AG04450 (cell line): ENCODE measurements at regions of chr12 and their contacts with region 1.

Region 1: DNA sequence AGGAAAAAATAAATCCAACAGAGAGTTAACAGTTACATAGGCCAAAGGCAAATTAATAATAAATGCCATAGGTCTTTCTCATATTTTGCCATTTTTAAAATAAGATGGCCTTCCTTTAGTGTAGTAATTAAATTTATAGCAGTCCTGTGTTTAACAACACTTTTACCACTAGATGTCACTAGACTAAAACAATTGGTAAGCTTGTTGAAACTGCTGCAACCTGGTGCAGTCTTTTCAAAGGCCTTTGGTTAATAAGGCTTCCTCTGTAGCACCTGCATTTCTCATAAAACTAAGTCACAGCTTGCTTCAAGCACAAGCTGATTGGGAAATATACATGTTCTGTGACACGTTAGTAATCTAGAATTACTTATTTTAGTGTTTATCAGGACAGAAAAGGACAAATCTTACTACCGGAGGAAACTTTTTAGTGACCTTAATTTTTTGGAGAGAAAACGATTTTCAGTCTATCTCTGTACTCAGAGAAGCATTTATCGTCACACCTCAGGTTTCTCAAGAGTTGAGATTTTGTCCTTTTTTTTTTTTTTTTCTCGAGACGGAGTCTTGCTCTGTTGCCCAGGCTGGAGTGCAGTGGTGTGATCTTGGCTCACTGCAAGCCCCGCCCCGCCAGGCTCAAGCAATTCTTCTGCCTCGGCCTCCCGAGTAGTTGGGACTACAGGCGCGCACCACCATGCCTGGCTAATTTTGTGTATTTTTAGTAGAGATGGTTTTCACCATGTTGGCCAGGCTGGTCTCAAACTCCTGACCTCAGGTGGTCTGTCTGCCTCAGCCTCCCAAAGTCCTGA is 20.0 kb downstream of the BORCS5 start:
- DNase-seq: peak; percentile 60
- H3K4me3 ChIP-seq: no peak overlapping the region
- H3K27ac ChIP-seq: no peak overlapping the region
- H3K27me3 ChIP-seq: no peaks in the 10 kb centered on the region
- CTCF ChIP-seq: peak; percentile 65

Region 2: DNA sequence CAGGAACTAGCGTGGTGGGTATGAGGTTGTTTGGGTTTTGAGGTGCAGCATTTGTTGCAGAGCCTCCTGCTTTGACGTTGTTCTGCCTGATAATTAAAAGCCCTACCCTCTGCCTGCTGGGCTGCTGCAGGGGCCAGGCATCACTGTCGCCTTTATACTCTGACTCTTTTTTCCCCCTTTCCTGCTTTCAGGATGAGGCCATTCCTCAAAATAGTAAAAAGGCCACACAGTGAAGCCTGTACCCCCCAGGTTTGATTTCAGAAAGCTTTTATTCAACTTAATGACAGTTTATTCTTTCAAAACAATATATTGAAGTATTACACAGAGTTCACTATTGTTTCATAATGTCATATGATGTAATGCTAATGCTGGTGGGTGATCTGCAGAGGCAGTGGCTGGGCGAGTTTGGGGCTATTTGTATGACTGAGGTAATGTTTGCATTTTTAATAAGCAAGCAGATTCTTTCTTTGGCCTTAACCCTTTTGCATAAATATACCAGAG is 10.9 kb before region 1 on chr12:
- CTCF ChIA-PET with region 1: interaction called, 11 read pairs
- POLR2A ChIA-PET with region 1: no interaction called
- DNase-seq: no peak
- H3K4me3 ChIP-seq: no peak overlapping the region
- H3K27ac ChIP-seq: peak overlapping the region; percentile 69
- H3K27me3 ChIP-seq: no peaks in the 10 kb centered on the region
- CTCF ChIP-seq: no peak

Region 3: GRCh38 chr12:12474931-12475795 is 98.3 kb after region 1 on chr12:
- CTCF ChIA-PET with region 1: no interaction called
- POLR2A ChIA-PET with region 1: no interaction called
- DNase-seq: no peak
- H3K4me3 ChIP-seq: no peak overlapping the region
- H3K27ac ChIP-seq: no peak overlapping the region
- H3K27me3 ChIP-seq: no peaks in the 10 kb centered on the region
- CTCF ChIP-seq: no peak

Region 4: DNA sequence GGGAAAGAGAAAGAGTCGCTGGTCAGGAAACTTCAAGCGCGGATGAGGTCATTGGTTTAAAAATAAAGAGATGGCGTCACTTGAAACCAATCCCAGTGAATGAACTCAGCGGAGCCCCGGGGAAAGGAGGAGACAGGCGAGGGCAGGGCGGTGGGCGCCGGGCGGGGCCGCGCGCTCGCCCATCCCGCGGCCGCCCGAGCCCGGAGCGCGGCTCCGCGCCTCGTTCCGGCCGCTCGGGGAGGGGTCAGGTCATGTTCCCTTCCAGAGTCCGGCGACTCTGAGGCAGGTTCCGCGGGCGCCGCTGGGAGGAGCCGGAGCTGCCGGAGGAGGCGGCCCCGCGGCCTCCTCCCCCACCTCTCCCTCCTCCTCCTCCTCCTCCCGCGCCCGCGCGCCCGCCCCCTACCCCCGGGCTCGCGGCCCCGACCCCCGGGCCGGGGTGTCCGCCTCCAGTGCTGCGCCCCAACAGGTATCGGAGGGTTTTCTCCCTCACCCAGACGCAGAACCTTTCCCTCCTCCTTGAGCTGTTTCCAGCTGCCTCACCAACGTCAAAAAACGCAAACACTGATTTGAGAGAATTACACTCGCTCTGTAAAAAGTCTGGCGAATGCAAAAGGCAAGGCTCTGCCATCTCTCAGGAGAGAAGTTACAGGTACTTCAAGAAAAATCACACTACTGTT is 185.9 kb after region 1 on chr12 and contains the start of gene DUSP16:
- CTCF ChIA-PET with region 1: interaction called, 18 read pairs
- POLR2A ChIA-PET with region 1: no interaction called
- DNase-seq: peak; percentile 81
- H3K4me3 ChIP-seq: peak within 1 kb of the TSS; percentile 88
- H3K27ac ChIP-seq: peak within 1 kb of the TSS; percentile 89
- H3K27me3 ChIP-seq: peaks cover 5% of the 10 kb centered on the region
- CTCF ChIP-seq: no peak
- polyA plus RNA-seq, gene DUSP16: 11.1 and 12.8 TPM in 2 replicates

Region 5: DNA sequence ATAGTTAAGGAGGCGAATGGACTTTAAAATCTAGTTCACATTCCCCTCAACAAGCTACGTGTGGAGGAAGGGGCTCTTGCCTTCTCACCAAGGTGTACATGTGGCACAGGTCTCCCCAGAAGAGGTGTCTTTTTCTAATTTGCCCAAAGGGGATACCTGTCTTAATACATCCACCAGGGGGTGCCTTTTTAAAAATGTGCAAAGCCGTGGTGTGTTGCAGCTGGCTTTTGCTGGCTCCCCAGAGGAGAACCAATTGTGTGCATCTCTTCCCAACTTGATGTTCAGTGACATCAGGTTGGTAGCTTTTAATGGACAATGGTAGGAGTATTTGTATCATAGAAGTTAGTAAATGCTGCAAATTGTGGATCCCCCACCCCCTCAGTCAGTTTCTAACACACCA is 268.6 kb after region 1 on chr12:
- CTCF ChIA-PET with region 1: interaction called, 12 read pairs
- POLR2A ChIA-PET with region 1: no interaction called
- DNase-seq: no peak
- H3K4me3 ChIP-seq: no peak overlapping the region
- H3K27ac ChIP-seq: peak overlapping the region; percentile 22
- H3K27me3 ChIP-seq: no peaks in the 10 kb centered on the region
- CTCF ChIP-seq: peak; percentile 60

Region 6: DNA sequence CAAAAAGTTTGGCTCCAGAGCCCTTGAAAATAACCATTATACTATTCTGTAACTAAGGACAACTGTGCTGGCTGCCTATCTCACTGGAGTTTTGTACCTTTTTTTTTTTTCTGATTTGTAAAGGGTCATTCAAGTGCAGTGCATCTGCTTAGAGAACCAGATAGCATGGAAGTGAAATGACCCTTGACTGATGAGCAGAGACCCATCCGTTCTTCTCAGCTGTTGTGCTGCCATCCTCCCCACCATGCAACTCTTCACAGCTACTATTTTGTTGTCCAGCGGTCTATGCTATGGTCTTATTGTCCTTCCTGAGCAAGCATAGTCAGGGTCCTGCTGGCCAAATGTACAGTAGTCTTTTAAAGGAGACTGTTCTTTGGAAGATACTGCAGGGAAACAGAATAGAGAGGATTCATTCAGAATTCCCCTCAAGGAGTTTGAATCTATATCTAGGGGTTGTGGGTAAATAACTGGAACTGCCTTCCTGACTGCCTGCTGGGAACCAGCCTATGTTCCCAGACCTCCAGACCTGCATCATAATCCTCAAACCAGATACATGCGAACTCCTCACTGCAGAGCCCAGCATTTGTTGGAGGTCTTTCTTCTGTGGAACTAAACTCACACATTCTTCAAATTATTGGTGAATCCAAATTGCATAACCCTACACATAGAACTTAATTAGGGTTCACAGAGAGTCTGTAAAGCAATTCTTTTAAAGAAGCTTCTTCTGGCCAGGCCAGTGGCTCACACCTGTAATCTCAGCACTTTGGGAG is 278.0 kb after region 1 on chr12:
- CTCF ChIA-PET with region 1: interaction called, 35 read pairs
- POLR2A ChIA-PET with region 1: no interaction called
- DNase-seq: no peak
- H3K4me3 ChIP-seq: no peak overlapping the region
- H3K27ac ChIP-seq: no peak overlapping the region
- H3K27me3 ChIP-seq: no peaks in the 10 kb centered on the region
- CTCF ChIP-seq: no peak

Region 7: DNA sequence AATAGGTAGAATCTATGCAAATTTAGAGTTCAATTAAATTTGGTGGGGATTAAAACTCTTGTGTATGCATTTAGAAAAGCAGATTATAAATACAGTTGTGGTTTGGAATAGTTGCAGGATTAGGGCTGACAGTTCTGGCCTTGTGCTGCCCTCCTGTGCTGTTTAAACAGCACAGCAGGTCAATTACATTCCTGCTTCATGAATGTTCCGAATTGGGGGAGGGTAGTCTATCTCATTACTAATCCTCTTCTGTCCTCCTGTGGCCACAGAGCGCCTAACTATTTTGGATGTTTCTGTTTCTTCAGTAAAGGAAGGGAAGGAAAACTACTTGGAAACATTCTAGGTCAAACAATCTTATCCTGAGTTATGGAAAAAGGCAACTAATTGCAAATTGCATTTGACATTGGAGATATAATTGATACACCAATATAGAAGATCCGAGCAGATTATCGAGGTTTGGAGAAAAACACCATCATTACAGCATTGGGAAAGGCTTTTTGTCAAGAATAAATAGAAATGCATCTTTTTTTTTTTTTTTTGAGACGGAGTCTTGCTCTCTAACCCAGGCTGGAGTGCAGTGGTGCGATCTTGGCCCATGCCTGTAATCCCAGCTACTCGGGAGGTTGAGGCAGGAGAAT is 327.9 kb after region 1 on chr12:
- CTCF ChIA-PET with region 1: interaction called, 20 read pairs
- POLR2A ChIA-PET with region 1: no interaction called
- DNase-seq: peak; percentile 90
- H3K4me3 ChIP-seq: no peak overlapping the region
- H3K27ac ChIP-seq: no peak overlapping the region
- H3K27me3 ChIP-seq: no peaks in the 10 kb centered on the region
- CTCF ChIP-seq: peak; percentile 99